ENCODE measurements at regions of chr22 and their contacts with region 1.

Region 1: DNA sequence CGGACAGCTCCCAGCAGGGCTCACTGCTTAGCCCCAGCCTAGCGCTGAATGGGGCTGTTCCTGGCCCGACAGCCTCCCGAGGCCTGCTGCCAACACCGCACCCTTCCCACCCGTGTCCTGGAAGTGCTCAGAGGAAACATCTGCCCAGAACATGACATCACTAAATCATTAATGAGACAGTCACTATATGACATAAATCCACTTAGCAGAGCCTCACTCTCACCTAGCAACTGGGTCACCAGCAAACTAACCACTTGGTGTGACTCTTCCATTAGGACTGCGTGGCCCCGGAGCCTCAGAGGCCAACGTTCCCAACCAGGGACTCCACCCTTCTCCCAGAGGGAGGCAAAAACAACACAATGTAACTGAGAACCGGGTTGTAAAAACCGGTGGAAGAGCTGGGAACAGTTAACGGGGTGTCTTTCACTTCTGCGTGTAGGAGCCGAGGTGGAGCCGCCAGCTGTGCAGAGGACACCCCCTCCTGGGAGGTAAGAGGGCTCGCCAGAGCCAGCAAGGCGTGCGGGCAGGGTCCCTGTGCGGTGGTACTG is 21.4 kb upstream of the PACSIN2 start:
- DNase-seq: no peak
- H3K4me3 Mint-ChIP-seq: no peak overlapping the region
- H3K27ac Mint-ChIP-seq: no peak overlapping the region
- H3K4me1 Mint-ChIP-seq: peaks cover 2% of the 10 kb centered on the region
- H3K27me3 Mint-ChIP-seq: no peaks in the 10 kb centered on the region

Region 2: DNA sequence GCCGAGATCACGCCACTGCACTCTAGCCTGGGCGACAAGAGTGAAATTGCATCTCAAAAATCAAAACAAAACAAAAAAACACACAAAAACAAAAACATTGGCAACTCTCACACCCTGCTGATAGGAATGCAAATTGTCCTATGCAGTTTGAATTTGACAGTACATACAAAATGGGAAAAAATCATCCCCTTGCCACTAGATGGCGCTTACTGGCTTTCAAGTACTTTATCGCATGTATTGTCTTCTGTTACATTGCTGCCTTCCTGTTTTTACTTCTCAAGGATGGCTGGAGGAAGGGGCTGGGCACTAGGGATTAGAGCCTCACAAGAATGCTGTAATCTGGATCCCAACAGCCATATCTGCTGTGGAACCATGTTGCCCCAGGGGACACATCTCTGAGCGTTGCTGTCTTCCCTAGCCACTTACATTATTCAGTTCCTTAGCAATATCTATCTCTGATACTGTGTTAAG is 256.3 kb before region 1 on chr22:
- CTCF ChIA-PET with region 1: interaction called, 14 read pairs
- POLR2A ChIA-PET with region 1: no interaction called
- DNase-seq: peak; percentile 52
- H3K4me3 Mint-ChIP-seq: no peak overlapping the region
- H3K27ac Mint-ChIP-seq: no peak overlapping the region
- H3K4me1 Mint-ChIP-seq: no peaks in the 10 kb centered on the region
- H3K27me3 Mint-ChIP-seq: no peaks in the 10 kb centered on the region

Region 3: DNA sequence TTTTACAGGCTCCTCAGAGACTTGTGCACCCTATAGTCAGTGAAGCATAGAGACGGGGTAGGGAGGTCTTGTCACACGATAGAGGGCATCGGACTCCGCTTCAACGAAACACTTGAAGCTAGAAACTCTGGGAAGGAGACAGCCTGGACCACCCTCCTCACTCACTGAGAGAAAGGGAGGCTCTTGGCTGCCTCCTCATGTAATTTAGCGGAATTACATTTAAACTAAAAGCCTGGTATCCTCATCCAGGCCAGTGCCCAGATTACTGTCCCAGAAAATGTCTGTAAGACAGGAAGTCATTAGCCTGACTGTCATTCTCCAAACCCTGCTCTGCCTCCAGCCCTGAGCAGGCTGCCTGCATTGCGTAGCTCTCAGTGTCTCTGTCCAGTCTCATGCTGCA is 16.8 kb after region 1 on chr22:
- CTCF ChIA-PET with region 1: no interaction called
- POLR2A ChIA-PET with region 1: no interaction called
- DNase-seq: no peak
- H3K4me3 Mint-ChIP-seq: no peak overlapping the region
- H3K27ac Mint-ChIP-seq: no peak overlapping the region
- H3K4me1 Mint-ChIP-seq: no peaks in the 10 kb centered on the region
- H3K27me3 Mint-ChIP-seq: no peaks in the 10 kb centered on the region